AG04449 (cell line): ENCODE measurements at regions of chr2 and their contacts with region 1.

Region 1: DNA sequence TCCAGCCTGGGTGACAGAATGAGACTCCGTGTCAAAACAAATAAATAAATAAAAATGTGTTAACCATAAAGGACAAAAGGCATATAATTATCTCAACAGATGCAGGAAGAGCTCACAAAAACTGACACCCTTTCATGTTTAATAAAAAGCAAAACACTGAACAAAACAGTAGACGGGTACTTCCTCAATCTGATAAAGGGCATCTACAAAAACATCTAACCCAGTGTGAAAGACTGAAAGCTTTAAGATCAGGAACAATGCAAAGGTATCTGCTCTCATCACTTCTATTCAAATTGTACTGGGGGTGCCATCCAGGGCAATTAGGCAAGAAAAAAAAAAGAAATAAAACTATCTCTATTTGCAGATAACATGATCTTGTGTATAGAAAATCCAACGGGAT is 11.7 kb upstream of the NCL start:
- DNase-seq: no peak
- H3K4me3 ChIP-seq: no peak overlapping the region
- CTCF ChIP-seq: no peak

Region 2: DNA sequence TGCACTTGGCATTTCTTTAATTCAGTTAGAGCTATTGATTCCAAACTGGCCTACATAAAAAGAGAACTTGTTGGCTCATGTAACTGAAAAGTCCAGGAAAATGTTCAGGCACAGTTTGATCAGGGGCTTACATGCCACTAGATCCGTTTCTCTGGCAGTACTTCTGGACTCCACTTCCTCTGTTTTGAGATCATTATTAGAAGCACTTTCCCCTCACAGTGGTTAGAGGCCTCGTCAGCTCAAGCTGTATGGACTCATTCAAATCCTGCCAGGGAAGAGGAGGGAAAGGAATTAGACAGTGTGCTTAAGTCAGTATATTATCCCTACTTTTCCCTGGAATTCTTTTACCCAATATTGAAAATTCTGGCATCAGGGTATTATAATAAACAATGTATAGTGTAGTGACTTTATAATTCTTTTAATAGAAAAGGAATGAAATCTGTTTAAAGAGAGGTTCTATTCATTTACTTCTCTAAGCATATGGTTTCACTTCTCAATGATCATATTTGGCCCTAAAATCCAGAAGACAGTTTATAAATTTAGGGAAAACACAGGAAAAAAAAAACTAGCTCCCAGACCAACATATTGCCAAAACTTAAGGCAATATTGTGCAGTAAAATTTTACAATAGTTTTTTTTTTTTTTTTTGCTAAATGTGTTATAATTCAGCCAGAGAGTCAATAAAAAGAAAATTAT is 185.5 kb before region 1 on chr2:
- CTCF ChIA-PET with region 1: no interaction called
- POLR2A ChIA-PET with region 1: no interaction called
- DNase-seq: no peak
- H3K4me3 ChIP-seq: no peak overlapping the region
- CTCF ChIP-seq: no peak

Region 3: GRCh38 chr2:231463698-231464575 is 12.0 kb before region 1 on chr2 and contains the start of gene NCL:
- CTCF ChIA-PET with region 1: interaction called, 97 read pairs
- POLR2A ChIA-PET with region 1: interaction called, 22 read pairs
- DNase-seq: peak; percentile 82
- H3K4me3 ChIP-seq: peak within 1 kb of the TSS; percentile 97
- CTCF ChIP-seq: no peak

Region 4: DNA sequence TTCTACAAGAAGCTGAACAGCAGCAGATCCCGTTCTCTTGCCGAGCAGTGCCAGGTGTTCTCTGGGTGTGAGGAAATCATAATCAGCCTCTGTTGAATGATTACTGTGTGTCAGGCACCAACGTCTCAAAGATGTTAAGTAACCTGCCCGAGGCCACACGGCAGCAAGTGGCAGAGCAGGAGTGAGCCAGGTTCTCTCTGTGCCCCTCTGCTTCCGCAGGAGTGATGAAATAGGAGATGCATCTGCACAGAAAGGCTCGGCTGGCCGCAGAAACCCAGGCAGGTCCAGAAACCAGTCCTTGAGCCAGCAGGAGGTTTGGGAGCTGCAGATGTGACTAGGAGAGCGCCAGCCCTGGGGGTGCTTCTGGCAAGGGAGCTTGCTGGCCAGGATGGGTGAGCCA is 378.7 kb after region 1 on chr2:
- CTCF ChIA-PET with region 1: no interaction called
- POLR2A ChIA-PET with region 1: no interaction called
- DNase-seq: no peak
- H3K4me3 ChIP-seq: no peak overlapping the region
- CTCF ChIP-seq: no peak